Prostate gland (tissue), 2 donors: ENCODE measurements at regions of chr20 and their contacts with region 1.

Region 1: GRCh38 chr20:33301192-33301930 is 18.3 kb downstream of the BPIFB1 start:
- DNase-seq: no peak
- H3K4me3 ChIP-seq: no peak overlapping the region
- H3K27ac ChIP-seq: no peak overlapping the region
- H3K4me1 ChIP-seq: no peaks in the 10 kb centered on the region
- H3K27me3 ChIP-seq: no peaks in the 10 kb centered on the region
- CTCF ChIP-seq: no peak
- POLR2A ChIP-seq: no peak

Region 2: DNA sequence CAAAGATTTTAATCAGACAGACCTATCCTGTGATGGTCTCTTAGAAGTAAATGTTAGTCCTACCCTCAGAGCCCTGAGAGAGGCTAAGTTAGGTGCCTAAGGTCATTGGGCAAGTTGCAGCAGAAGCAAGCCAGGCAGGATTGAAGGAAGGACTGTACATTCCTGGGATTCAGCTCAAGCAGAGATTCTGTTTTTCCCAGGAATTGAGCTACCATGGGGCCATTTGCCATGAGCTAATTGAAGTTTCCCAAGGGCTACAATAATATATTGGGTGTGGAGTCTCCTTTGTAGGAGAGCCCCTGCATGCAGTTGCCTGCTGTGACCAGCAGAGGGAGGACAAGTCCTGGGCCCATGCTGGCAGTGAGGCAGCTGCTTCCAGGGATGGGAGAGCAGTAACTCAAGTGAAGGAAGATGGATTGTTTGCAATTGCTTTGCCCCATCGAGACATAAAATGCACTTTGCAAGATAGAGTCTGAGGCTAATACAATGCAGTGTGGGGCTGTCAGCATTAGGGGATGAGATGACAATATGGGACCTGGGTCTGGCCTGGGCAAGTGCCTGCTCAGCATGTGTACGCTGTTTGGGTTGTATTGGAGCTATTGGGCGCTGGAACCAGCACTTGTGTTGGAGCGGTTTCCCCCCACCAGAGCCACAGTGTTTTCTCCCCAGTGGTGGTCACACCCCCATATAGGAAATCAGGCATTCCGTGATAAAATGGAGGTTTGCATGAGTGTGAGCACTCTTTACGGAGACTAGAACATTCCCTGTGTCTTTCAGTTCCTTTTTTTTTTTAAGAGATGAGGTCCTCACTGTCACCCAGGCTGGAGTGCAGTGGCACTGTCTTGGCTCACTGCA is 511.2 kb before region 1 on chr20:
- intact Hi-C with region 1: loop called (anchors 5 kb)
- DNase-seq: peak; percentile 63
- H3K4me3 ChIP-seq: no peak overlapping the region
- H3K27ac ChIP-seq: no peak overlapping the region
- H3K4me1 ChIP-seq: no peaks in the 10 kb centered on the region
- H3K27me3 ChIP-seq: no peaks in the 10 kb centered on the region
- CTCF ChIP-seq: peak; percentile 93 to 96 (median 94)
- POLR2A ChIP-seq: no peak

Region 3: GRCh38 chr20:32902456-32903420 is 398.6 kb before region 1 on chr20:
- intact Hi-C with region 1: loop called (anchors 5 kb)
- DNase-seq: peak; percentile 11
- H3K4me3 ChIP-seq: no peak overlapping the region
- H3K27ac ChIP-seq: no peak overlapping the region
- H3K4me1 ChIP-seq: no peaks in the 10 kb centered on the region
- H3K27me3 ChIP-seq: no peaks in the 10 kb centered on the region
- CTCF ChIP-seq: peak; percentile 73 to 88 (median 84)
- POLR2A ChIP-seq: no peak

Region 4: DNA sequence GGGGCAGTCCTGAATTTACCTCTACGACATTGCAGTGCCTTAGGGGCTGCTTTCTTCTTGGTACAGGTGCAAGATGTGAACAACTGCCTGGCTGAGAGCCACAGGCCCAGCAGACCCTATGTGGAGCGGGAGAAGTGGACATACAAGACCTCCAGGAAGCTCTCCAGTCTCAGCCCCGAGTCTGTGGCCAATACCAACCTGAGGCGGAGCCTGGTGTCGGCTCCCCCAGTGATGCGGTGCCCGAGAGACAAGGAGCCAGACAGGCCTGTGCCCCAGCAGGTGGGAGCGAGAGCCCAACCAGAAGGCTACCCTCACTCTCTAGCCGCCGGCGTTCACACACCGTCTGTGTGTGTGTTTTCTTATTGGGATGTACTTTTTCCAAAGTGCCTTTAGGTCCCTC is 383.1 kb before region 1 on chr20:
- intact Hi-C with region 1: no loop called
- DNase-seq: no peak
- H3K4me3 ChIP-seq: no peak overlapping the region
- H3K27ac ChIP-seq: no peak overlapping the region
- H3K4me1 ChIP-seq: no peaks in the 10 kb centered on the region
- H3K27me3 ChIP-seq: no peaks in the 10 kb centered on the region
- CTCF ChIP-seq: no peak
- POLR2A ChIP-seq: no peak

Region 5: GRCh38 chr20:33009214-33010132 is 291.9 kb before region 1 on chr20:
- intact Hi-C with region 1: no loop called
- DNase-seq: no peak
- H3K4me3 ChIP-seq: no peak overlapping the region
- H3K27ac ChIP-seq: no peak overlapping the region
- H3K4me1 ChIP-seq: peaks cover 4% of the 10 kb centered on the region
- H3K27me3 ChIP-seq: no peaks in the 10 kb centered on the region
- CTCF ChIP-seq: no peak
- POLR2A ChIP-seq: no peak

Region 6: DNA sequence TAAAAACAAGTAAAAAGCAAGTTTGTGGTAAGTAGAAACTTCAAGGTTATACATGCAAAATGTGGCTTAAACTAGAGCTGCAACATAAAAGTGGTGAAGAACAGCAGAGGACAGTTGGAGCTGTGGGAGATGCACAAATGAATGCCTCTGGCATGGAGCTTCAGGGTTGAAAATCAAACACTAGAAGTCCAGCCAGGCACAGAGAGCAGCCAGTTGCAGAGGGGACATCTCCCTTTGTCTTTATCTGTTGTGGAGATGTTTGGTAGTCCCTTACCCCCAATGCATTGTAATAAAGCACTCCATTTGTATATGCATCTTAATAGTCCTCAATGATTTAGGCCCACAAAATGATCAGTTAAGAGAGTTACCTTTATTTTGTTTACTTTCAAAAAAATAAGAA is 287.7 kb after region 1 on chr20:
- intact Hi-C with region 1: no loop called
- DNase-seq: no peak
- H3K4me3 ChIP-seq: no peak overlapping the region
- H3K27ac ChIP-seq: no peak overlapping the region
- H3K4me1 ChIP-seq: no peaks in the 10 kb centered on the region
- H3K27me3 ChIP-seq: no peaks in the 10 kb centered on the region
- CTCF ChIP-seq: no peak
- POLR2A ChIP-seq: no peak

Region 7: GRCh38 chr20:35001596-35002362 is 1700.4 kb after region 1 on chr20:
- intact Hi-C with region 1: no loop called
- DNase-seq: no peak
- H3K4me3 ChIP-seq: no peak overlapping the region
- H3K27ac ChIP-seq: no peak overlapping the region
- H3K4me1 ChIP-seq: peaks cover 7% of the 10 kb centered on the region
- H3K27me3 ChIP-seq: no peaks in the 10 kb centered on the region
- CTCF ChIP-seq: no peak
- POLR2A ChIP-seq: no peak